Activated CD4-positive, alpha-beta memory T cell treated with anti-CD3 and anti-CD28 coated beads for 36 hours (primary cell): ENCODE measurements at regions of chr10 and their contacts with region 1.

Region 1: DNA sequence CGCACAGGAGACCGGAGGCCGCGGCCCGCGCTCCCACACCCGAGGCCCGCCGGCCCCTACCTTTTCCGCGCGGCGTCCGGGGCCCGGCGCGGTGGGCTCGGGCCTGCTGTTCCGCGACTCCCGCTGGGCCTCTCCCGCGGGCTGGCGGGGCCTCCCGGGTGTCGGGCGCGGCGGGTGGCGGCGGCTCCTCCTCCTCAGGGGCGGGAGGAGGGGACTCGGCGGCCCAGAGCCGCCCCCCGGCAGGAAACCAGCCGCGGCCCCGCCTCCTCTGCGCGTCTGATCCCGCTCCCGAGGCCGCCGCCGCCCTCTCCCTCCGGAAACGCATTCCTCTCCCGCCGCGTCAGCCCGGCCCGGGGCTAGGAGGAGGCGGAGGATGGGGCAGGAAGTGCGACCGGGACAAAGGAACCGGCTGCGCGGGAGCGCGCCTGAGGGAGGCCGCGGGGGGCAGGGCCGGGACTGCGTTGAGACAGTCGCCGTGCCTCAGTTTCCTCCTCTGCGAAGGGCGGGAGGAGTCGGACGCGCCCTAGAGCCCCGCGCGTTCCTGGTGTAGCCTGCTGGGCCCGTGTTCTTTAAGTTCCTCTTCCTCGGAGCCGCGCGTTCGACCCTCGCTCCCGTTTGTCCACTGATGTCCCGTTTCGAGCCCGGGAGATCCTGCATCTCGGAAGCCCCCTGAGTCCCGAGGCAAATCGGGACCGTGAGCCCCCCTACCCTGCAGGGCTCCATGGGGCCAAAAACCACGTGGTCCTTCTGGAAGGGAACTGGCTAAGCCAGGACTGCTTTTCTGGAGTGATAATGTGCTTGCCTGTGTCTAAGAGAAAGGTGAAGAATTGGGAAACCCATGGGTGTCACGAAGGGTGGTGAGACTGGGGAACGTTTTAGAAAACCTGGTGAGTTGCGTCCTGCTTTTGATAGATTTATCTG is at the start of gene ITGB1:
- DNase-seq: peak; percentile 90
- H3K4me3 Mint-ChIP-seq: peak within 1 kb of the TSS; percentile 90
- H3K27ac Mint-ChIP-seq: peak within 1 kb of the TSS; percentile 99
- H3K4me1 Mint-ChIP-seq: peaks cover 55% of the 10 kb centered on the region
- H3K27me3 Mint-ChIP-seq: peaks cover 4% of the 10 kb centered on the region
- total RNA-seq, gene ITGB1: 113 to 117 TPM

Region 2: GRCh38 chr10:32055813-32056600 is 902.3 kb before region 1 on chr10 and contains the start of gene KIF5B:
- CTCF ChIA-PET with region 1: no interaction called
- POLR2A ChIA-PET with region 1: no interaction called
- intact Hi-C with region 1: loop called (anchors 10 kb)
- DNase-seq: peak; percentile 90
- H3K4me3 Mint-ChIP-seq: peak within 1 kb of the TSS; percentile 96
- H3K27ac Mint-ChIP-seq: peak within 1 kb of the TSS; percentile 94
- H3K4me1 Mint-ChIP-seq: peaks cover 37% of the 10 kb centered on the region
- H3K27me3 Mint-ChIP-seq: no peaks in the 10 kb centered on the region
- total RNA-seq, gene KIF5B: 73.9 to 75.2 TPM

Region 3: DNA sequence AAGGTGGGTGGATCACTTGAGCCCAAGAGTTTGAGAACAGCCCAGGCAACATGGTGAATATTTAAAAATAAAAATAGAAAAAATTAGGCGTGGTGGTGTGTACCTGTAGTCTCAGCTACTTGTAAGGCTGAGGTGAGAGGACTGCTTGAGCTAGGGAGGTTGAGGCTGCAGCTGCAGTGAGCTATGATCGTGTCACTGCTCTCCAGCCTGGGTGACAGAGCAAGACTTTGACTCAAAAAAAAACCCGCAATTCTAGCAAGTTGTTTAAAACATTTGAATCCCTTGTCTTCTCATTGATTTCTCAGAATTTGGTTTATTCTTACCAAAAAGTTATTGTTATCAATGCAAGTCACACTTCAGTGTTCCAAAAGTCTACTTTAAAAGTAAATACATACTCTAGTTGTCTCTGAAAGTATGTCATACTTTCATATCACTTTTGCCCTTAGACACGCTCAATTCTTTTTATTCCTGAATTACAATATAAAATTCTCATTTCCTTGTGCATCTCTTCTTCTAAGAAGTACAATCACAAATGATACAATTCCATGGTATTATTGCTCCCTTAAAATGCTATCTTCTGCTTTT is 617.7 kb before region 1 on chr10:
- CTCF ChIA-PET with region 1: no interaction called
- POLR2A ChIA-PET with region 1: no interaction called
- intact Hi-C with region 1: loop called (anchors 5 kb)
- DNase-seq: peak; percentile 67
- H3K4me3 Mint-ChIP-seq: peak overlapping the region; percentile 17
- H3K27ac Mint-ChIP-seq: peak overlapping the region; percentile 73
- H3K4me1 Mint-ChIP-seq: peaks cover 87% of the 10 kb centered on the region
- H3K27me3 Mint-ChIP-seq: no peaks in the 10 kb centered on the region

Region 4: GRCh38 chr10:32445740-32446535 is 512.4 kb before region 1 on chr10 and contains the start of gene CCDC7:
- CTCF ChIA-PET with region 1: no interaction called
- POLR2A ChIA-PET with region 1: no interaction called
- intact Hi-C with region 1: loop called (anchors 5 kb)
- DNase-seq: peak; percentile 89
- H3K4me3 Mint-ChIP-seq: peak within 1 kb of the TSS; percentile 89
- H3K27ac Mint-ChIP-seq: peak within 1 kb of the TSS; percentile 96
- H3K4me1 Mint-ChIP-seq: peaks cover 13% of the 10 kb centered on the region
- H3K27me3 Mint-ChIP-seq: no peaks in the 10 kb centered on the region
- total RNA-seq, gene CCDC7: 8.6 to 11.6 TPM

Region 5: DNA sequence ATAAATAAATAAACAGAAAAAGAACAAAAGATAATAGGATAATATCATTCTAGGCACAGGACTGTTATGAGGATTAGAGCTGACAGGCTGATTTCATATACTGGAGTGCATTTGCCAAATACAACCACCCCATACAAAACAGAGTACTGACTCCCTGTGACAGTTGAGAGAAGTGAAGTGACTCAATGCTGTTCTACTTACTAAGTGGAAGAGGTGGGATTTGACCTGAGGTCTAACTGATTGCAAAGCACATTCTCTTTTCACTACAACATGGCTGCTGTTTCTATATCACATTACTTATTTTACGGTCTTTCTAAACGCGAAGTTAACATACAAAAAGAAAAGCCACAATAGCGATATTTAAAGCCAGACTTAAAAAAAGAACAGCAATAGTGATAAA is 51.8 kb before region 1 on chr10:
- CTCF ChIA-PET with region 1: no interaction called
- POLR2A ChIA-PET with region 1: no interaction called
- intact Hi-C with region 1: no loop called
- DNase-seq: no peak
- H3K4me3 Mint-ChIP-seq: peak overlapping the region; percentile 27
- H3K27ac Mint-ChIP-seq: peak overlapping the region; percentile 15
- H3K4me1 Mint-ChIP-seq: peaks cover 7% of the 10 kb centered on the region
- H3K27me3 Mint-ChIP-seq: no peaks in the 10 kb centered on the region

Region 6: GRCh38 chr10:32980558-32981468 is 22.5 kb after region 1 on chr10:
- CTCF ChIA-PET with region 1: interaction called, 4 read pairs
- POLR2A ChIA-PET with region 1: interaction called, 9 read pairs
- intact Hi-C with region 1: loop called (anchors 1 kb)
- DNase-seq: peak; percentile 93
- H3K4me3 Mint-ChIP-seq: peak overlapping the region; percentile 85
- H3K27ac Mint-ChIP-seq: peak overlapping the region; percentile 90
- H3K4me1 Mint-ChIP-seq: peaks cover 34% of the 10 kb centered on the region
- H3K27me3 Mint-ChIP-seq: no peaks in the 10 kb centered on the region

Region 7: DNA sequence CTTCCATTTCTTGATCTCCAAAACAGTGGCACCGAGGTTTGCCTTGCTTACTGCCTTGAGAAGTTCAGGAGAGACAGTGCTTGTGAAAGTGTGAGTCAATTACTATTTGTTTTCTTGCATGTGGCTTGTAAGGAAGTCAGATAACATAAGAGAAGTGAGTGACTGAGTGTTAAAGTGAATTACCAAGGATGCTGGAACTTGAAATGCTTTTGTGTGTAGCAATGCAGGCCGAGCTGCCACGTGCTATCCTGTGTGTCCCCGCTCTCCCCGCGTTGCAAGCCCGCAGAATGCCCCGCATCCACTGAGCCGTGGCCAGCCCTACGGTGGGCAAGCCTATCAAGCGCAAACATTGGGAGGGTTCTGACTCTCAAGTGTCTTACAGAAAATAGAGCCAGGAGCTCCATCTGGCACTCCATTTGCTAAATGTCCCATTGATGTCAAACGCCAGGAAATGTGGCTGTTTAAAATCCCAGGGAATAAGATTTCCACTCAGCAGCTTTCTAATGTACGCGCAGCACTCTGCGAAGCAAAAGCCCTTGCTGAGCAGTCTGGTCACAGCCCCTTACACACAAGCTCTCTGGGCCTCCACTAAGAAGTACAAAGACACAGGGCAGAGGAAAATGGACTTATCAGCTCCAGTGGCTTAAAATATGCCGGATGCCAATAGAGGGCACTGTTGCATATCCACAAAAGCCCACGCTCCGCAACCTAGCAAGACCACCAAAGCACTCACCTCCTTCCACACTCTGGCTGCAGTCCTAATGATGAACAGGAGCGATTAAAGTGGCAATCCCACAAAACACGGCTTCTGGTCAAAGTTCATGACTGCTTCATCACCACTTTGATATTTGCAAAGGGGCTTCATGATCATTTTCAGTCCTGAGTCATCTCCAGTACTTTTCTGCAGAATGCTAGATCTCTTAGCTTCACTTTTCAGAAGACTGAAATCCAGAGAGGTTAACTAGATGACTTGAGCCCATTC is 157.7 kb after region 1 on chr10:
- CTCF ChIA-PET with region 1: no interaction called
- POLR2A ChIA-PET with region 1: no interaction called
- intact Hi-C with region 1: loop called (anchors 5 kb)
- DNase-seq: peak; percentile 53
- H3K4me3 Mint-ChIP-seq: peak overlapping the region; percentile 47
- H3K27ac Mint-ChIP-seq: peak overlapping the region; percentile 81
- H3K4me1 Mint-ChIP-seq: peaks cover 92% of the 10 kb centered on the region
- H3K27me3 Mint-ChIP-seq: peaks cover 4% of the 10 kb centered on the region

Region 8: DNA sequence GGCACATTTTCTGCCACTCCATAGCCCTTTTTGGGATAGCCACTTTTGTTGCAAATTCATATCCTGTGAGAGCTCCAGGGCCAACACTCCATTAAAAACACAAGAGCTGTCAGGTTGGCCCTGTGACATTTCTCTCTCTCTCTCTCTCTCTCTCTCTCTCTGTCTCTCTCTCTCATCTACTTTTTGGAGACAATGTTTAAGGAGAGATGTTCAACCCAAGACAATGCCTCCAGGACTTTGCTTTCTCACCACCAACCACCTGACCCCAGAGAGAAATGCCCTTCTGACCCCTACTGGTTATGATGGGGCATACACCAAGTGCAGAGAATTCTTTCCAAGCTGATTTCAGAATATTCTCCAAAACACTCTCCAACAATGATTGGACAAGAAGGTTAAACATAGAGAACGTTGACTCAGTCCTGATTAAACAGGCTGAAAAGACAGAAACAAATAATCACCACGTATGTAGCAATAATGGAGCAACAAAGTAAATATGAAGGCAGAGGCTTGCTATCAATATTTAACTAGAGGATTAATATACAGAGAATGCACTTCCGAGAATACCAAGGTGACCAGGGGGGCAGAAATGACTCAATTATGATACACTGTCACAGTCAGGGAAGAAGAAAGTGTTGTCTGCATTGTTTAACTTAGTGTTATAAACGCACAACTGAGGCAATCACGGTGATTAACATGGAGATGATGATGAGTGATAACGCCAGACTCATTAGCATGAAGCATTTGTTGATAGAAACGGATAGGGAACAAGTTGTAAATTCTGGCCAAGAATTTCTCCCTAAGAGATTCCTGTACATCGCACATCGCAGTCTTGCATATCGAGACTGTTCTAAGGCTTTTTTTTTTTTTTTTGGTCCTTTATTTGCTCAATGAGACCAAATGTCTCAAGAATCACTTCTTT is 197.6 kb after region 1 on chr10:
- CTCF ChIA-PET with region 1: interaction called, 3 read pairs
- POLR2A ChIA-PET with region 1: no interaction called
- intact Hi-C with region 1: loop called (anchors 1 kb)
- DNase-seq: peak; percentile 53
- H3K4me3 Mint-ChIP-seq: no peak overlapping the region
- H3K27ac Mint-ChIP-seq: no peak overlapping the region
- H3K4me1 Mint-ChIP-seq: peaks cover 46% of the 10 kb centered on the region
- H3K27me3 Mint-ChIP-seq: no peaks in the 10 kb centered on the region